PC-3 (cell line): ENCODE measurements at regions of chr3 and their contacts with region 1.

Region 1: DNA sequence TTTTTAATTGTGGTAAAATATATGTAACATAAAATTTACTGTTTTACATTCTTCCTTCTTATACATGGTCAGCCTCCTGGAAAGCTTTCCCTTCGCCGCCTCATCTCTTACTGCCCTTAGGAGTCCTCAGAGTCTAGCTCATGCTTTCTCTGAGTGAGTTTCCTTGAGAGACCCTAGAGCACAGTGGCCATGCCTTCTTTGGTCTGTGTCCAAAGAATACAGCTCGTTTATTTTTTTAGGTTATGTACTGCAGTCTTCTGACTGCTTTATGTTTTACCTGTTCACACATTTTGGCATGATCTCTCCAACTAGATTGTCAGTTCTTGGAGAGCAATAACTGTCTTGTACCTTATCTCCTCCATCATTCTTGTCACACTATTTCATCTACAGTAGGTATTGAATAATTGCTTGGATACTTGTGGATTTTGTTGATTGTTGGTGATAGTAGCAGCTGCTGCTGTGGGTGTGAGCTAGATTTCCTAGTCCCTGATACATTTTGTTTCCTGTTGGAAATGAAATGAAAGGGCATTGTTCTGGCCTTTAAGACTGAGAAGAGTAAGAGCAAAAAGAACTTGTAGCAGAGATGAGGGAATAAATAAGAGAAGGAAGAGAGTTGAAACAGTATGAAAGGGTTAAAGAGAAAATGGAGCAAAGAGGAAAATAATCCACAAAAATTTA is 10.9 kb downstream of the ARIH2 start:
- DNase-seq: no peak
- ATAC-seq: no peak
- H3K4me3 ChIP-seq: no peak overlapping the region
- H3K27ac ChIP-seq: no peak overlapping the region
- H3K4me1 ChIP-seq: peaks cover 28% of the 10 kb centered on the region
- H3K27me3 ChIP-seq: no peaks in the 10 kb centered on the region
- CTCF ChIP-seq: no peak

Region 2: GRCh38 chr3:48784426-48785120 is 144.9 kb before region 1 on chr3:
- CTCF ChIA-PET with region 1: no interaction called
- POLR2A ChIA-PET with region 1: no interaction called
- intact Hi-C with region 1: loop called (anchors 10 kb)
- DNase-seq: peak; percentile 58
- ATAC-seq: peak; percentile 98
- H3K4me3 ChIP-seq: no peak overlapping the region
- H3K27ac ChIP-seq: peak overlapping the region; percentile 67
- H3K4me1 ChIP-seq: 0 out of 2 replicates have a peak, but pooled peaks cover 4% of the 10 kb centered on the region
- H3K27me3 ChIP-seq: no peaks in the 10 kb centered on the region
- CTCF ChIP-seq: no peak

Region 3: GRCh38 chr3:48952510-48953118 is 23.1 kb after region 1 on chr3:
- CTCF ChIA-PET with region 1: no interaction called
- POLR2A ChIA-PET with region 1: no interaction called
- intact Hi-C with region 1: no loop called
- DNase-seq: peak; percentile 59
- ATAC-seq: peak; percentile 89
- H3K4me3 ChIP-seq: no peak overlapping the region
- H3K27ac ChIP-seq: no peak overlapping the region
- H3K4me1 ChIP-seq: no peaks in the 10 kb centered on the region
- H3K27me3 ChIP-seq: no peaks in the 10 kb centered on the region
- CTCF ChIP-seq: peak; percentile 84